Activated naive CD4-positive, alpha-beta T cell treated with anti-CD3 and anti-CD28 coated beads for 36 hours (primary cell): ENCODE measurements at regions of chr16 and their contacts with region 1.

Region 1: DNA sequence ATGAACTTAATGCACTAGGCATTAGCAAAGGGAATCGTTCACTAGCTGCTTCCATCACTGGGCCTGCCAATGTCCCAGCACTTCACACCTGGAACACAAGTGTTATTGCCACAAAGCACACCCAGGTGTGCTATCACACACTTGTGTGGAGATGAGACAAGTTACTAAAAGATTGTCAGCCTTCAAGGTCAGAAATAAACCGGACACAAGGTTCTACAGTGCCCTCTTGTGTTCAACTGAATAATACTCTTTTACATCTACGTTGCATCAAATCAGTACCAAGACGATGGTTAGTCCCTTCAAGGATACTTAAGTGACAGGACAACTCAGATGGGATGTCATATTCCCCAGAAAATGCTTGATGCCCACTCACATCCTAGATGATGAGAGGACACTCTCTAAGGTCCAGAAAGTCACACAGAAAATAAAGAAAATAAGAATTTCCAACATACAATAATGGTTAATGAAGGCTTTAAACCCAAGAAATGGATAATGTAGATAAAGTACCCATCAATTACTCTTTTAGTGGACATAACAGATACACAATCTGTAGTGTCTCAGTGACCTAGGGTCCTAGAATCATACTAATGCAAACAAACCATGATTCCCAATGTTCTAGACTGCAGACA is 16.4 kb upstream of the GLG1 start:
- DNase-seq: no peak
- H3K4me3 Mint-ChIP-seq: no peak overlapping the region
- H3K27ac Mint-ChIP-seq: peak overlapping the region; percentile 47
- H3K4me1 Mint-ChIP-seq: peaks cover 38% of the 10 kb centered on the region
- H3K27me3 Mint-ChIP-seq: no peaks in the 10 kb centered on the region

Region 2: GRCh38 chr16:74372953-74373846 is 250.1 kb before region 1 on chr16:
- CTCF ChIA-PET with region 1: no interaction called
- intact Hi-C with region 1: loop called (anchors 5 kb)
- DNase-seq: no peak
- H3K4me3 Mint-ChIP-seq: no peak overlapping the region
- H3K27ac Mint-ChIP-seq: no peak overlapping the region
- H3K4me1 Mint-ChIP-seq: peaks cover 2% of the 10 kb centered on the region
- H3K27me3 Mint-ChIP-seq: no peaks in the 10 kb centered on the region

Region 3: DNA sequence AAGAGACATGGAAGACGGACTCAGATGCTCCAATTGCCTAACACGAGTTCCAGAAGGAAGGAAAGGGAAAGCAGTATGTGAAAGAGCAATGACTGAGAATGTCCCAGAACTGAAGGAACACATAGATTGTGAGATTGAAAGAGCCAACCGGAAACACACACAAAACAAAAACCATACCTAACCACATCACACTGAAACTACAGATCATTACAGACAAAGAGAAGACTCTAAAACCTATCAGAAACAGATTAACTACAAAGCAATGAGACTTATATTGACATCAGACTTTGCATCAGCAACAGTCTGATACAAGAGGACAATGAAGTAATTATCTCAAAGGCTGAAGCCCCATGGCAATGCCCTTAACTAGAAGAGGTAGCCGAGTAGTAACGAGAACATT is 156.5 kb before region 1 on chr16:
- CTCF ChIA-PET with region 1: interaction called, 12 read pairs
- intact Hi-C with region 1: loop called (anchors 1 kb)
- DNase-seq: no peak
- H3K4me3 Mint-ChIP-seq: no peak overlapping the region
- H3K27ac Mint-ChIP-seq: no peak overlapping the region
- H3K4me1 Mint-ChIP-seq: peaks cover 17% of the 10 kb centered on the region
- H3K27me3 Mint-ChIP-seq: no peaks in the 10 kb centered on the region

Region 4: DNA sequence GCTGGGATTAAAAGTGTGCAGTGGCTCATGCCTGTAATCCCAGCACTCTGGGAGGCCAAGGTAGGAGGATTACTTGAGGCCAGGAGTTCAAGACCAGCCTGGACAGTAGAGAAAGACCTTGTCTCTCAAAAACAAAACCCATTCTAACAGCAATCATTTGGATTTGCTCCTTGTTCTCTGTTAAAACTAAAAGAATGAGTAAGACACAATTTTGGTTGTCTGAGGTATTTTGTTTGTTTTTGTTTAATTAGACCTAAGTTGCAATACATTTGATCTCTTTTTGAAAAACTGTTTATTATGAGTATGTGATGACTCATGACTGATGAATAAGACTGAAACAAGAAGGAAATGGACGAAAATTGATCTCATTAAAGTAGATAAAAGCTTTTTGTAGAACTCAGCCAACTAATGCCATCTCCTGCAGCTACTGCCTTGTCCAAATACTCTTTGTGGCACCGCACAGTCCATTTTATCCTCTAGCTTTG is 45.4 kb before region 1 on chr16:
- CTCF ChIA-PET with region 1: no interaction called
- intact Hi-C with region 1: loop called (anchors 1 kb)
- DNase-seq: no peak
- H3K4me3 Mint-ChIP-seq: no peak overlapping the region
- H3K27ac Mint-ChIP-seq: peak overlapping the region; percentile 10
- H3K4me1 Mint-ChIP-seq: peaks cover 62% of the 10 kb centered on the region
- H3K27me3 Mint-ChIP-seq: no peaks in the 10 kb centered on the region

Region 5: DNA sequence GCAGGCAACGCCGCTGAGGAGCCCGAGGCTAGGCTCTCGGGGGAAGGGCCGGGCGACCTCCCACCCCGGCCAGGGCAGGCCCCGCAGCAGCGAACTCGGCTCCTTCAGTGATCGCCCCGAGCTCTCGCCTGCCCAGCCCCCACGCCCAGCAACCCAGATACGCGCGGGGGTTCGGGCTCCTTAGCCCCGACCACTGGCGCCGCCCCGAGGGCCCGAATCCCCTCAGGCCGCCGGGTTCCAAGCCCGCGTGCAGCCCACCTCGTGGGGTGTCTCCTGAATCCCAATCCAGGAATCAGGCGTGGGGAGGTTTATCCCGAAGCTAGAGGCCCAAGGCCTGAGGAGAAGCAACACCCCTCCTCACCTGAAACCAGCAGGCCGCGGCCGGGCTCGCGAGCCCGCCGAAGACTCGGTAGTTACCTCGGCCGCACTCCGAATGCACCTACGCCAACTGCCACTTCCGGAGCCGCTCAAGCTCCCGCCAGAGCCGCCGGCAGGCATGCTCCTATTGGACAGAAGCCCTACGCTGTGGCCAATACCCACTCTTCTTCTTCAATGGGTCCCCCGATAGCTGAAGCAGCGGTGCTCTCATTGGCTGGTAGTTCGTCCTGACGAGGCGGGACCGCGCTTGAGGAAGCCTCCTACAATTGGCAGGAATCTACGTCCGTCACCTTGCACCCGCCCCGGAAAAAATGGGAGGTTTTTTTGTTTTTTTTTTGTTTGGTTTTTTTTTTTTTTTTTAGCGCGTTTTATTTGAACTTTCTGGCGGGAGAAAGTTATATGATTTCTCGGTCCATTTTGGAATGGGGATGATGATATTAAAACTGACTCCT is 43.3 kb after region 1 on chr16 and contains the start of gene RFWD3:
- CTCF ChIA-PET with region 1: no interaction called
- intact Hi-C with region 1: loop called (anchors 1 kb)
- DNase-seq: peak; percentile 98
- H3K4me3 Mint-ChIP-seq: peak within 1 kb of the TSS; percentile 89
- H3K27ac Mint-ChIP-seq: peak within 1 kb of the TSS; percentile 88
- H3K4me1 Mint-ChIP-seq: peaks cover 39% of the 10 kb centered on the region
- H3K27me3 Mint-ChIP-seq: no peaks in the 10 kb centered on the region
- total RNA-seq, gene RFWD3: 114 to 124 TPM

Region 6: GRCh38 chr16:74724820-74725549 is 101.7 kb after region 1 on chr16:
- CTCF ChIA-PET with region 1: no interaction called
- intact Hi-C with region 1: no loop called
- DNase-seq: no peak
- H3K4me3 Mint-ChIP-seq: no peak overlapping the region
- H3K27ac Mint-ChIP-seq: no peak overlapping the region
- H3K4me1 Mint-ChIP-seq: peaks cover 2% of the 10 kb centered on the region
- H3K27me3 Mint-ChIP-seq: no peaks in the 10 kb centered on the region